Left ventricle myocardium inferior (tissue), 1 donor: ENCODE measurements at regions of chr17 and their contacts with region 1.

Region 1: DNA sequence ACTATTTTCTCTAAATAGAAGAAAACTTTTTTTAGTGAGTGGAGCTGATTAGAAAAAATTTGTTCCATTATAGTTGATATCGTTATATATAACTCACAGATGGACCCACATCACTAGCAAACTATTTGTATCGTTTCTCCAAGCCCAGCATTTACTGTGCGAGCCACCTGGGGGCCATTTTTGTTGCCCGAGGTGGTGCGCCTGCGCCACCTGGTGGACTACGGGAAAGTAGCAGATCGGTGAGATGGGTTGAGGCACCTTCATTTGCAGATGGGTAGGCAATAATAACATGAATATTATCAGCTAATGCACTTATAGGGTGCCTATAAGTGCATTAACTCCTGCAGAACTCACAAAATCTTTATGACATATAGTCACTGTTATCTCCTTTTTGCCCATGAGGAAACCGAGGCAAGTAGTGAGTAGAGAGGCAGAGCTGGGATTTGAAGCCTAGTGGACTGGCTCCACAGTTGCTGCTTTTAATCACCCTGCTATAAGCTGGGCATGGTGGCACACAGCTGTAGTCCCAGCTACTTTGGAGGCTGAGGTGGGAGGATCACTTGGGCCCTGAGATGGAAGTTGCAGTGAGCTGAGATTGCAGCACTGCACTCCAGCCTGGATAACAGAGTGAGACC is 23.2 kb upstream of the NTN1 start:
- DNase-seq: peak; percentile 56
- H3K4me3 ChIP-seq: no peak overlapping the region
- H3K27ac ChIP-seq: no peak overlapping the region
- H3K4me1 ChIP-seq: peaks cover 10% of the 10 kb centered on the region
- H3K27me3 ChIP-seq: peaks cover 39% of the 10 kb centered on the region
- CTCF ChIP-seq: peak; percentile 86

Region 2: DNA sequence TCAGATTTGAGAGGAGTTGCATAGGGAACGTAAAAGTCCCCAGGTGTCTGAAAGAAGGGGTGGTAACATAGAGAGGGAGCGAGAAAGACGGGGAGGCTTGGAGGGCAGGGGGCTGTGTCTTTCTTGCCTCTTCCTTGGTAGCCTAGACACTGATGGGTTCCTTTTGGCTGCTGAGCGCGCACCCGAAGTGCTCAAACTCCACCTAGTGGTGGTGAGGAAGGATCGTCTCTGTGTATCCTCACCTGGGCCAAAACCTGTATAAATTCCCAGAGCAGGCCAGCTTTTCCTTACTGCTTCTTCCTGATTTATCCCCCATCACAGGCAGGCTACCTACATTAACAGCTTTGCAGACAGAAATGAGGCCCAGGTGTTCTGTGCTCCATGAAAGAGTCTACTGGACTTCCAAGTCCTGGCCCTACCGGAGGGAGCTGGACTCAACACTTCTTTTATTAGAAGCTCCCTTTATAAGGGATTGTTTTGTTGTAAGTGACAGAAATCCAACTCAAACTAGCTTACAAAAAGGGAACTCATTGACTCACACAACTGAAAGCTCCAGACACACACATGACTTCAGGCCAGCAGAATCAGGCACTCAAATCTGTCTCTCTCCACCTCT is 697.4 kb before region 1 on chr17:
- intact Hi-C with region 1: no loop called
- DNase-seq: peak; percentile 39
- H3K4me3 ChIP-seq: no peak overlapping the region
- H3K27ac ChIP-seq: no peak overlapping the region
- H3K4me1 ChIP-seq: peaks cover 3% of the 10 kb centered on the region
- H3K27me3 ChIP-seq: no peaks in the 10 kb centered on the region
- CTCF ChIP-seq: peak; percentile 88

Region 3: DNA sequence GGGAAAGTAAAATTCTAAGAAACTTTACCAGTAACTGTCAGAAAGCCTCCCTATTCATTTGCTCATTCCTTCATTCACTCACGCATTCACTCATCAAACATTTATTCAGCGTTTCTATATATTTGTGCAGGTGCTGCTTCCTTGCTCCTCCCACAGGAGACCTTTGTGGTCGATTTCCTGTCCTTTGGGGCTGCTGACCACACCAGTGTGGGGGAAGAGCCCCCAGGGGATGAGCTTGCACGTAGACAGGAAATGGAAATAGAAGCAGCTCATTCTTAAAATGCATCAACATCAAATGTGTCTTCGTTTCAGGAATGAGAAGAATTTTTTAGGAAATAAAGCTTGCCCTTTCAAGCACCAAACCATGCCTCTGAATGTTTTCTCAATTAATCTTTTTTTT is 140.2 kb before region 1 on chr17:
- intact Hi-C with region 1: no loop called
- DNase-seq: peak; percentile 41
- H3K4me3 ChIP-seq: no peak overlapping the region
- H3K27ac ChIP-seq: peak overlapping the region; percentile 72
- H3K4me1 ChIP-seq: peaks cover 30% of the 10 kb centered on the region
- H3K27me3 ChIP-seq: no peaks in the 10 kb centered on the region
- CTCF ChIP-seq: no peak

Region 4: DNA sequence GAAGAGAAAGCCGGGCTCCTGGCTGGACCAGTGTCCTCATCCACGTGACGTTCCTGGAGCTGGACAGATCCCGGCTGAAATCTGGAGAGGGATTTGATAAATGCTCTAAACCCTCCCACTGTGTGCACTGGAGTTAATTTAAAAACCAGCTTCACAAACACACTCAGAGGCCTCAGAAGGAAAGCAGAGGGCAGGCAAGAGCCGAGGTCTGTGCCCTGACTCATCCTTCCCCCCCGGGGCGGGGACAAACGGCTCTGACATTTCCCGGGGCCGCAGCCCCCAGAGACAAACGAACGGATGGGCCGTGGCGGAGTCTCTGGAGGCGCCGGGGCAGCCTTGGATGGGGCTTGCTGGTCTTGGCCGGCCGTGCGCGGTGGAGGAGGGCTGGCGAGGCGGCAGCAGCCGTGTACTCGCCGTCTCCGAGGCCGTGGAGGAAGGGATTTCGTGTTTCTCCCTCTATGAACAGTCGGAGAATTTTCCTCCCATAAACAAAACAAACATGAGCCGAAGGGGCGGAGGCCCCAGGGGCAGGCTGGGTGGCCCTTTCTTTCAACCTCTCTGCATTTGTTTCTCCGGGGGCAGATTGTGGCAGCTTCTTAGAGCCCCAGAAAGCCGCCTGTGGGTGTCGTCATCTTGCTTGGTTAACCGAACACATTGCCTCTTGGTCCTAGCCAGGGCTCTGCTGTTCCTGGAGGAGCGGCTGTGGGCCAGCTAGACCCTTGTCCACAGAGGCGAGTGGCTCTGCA is 117.5 kb after region 1 on chr17:
- intact Hi-C with region 1: no loop called
- DNase-seq: peak; percentile 66
- H3K4me3 ChIP-seq: peak overlapping the region; percentile 59
- H3K27ac ChIP-seq: peak overlapping the region; percentile 52
- H3K4me1 ChIP-seq: peaks cover 12% of the 10 kb centered on the region
- H3K27me3 ChIP-seq: no peaks in the 10 kb centered on the region
- CTCF ChIP-seq: peak; percentile 53

Region 5: GRCh38 chr17:9529033-9529700 is 531.1 kb after region 1 on chr17:
- intact Hi-C with region 1: loop called (anchors 5 kb)
- DNase-seq: no peak
- H3K4me3 ChIP-seq: no peak overlapping the region
- H3K27ac ChIP-seq: no peak overlapping the region
- H3K4me1 ChIP-seq: no peaks in the 10 kb centered on the region
- H3K27me3 ChIP-seq: no peaks in the 10 kb centered on the region
- CTCF ChIP-seq: peak; percentile 51